Left ventricle myocardium inferior (tissue), 1 donor: ENCODE measurements at regions of chr14 and their contacts with region 1.

Region 1: DNA sequence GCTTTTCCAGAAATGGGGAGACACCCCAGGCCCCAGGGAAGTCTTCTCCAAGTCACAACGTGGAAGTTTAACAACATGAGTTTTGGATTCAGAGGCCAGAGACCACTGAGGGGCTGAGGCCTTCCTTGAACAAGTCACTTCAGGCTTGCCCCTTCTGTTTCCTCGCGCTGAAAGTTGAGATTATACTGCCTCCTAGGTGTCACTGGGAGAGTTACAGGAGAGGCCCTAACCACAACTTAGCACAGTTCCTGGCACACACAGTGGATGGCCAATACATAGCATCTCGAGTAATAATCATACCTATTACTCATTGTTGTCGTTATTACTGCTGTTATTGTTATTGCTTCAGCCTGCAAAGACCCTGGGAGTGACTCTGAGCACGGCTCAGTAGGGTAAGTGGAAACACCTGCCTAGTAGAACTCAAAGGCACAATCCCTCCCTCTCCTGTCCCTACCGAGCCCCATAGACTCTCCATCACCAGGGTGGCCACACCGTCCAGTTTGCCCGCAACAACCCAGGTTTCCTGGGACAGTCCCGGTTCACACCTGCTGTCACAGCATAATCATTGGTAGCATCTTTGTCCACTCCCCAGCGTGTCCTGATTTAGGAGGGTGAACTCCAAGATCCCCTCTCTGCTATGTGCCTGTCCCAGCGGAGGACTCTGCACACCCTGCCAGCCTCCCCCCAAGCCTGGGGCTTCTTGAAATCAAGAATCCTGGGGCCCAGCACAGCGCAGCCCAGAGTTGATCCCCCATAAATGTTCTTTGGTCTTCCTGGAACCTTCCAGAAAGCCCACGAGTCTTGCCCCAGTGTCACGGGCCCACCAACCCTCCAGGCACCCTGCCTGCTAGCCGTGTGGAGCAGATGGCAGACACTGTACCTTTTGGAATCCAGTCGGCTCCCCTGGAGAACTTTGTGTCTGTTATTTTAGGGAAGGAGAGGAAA is 85.0 kb downstream of the SYNE3 start:
- DNase-seq: no peak
- H3K4me3 ChIP-seq: no peak overlapping the region
- H3K27ac ChIP-seq: peak overlapping the region; percentile 43
- H3K4me1 ChIP-seq: peaks cover 14% of the 10 kb centered on the region
- H3K27me3 ChIP-seq: no peaks in the 10 kb centered on the region
- CTCF ChIP-seq: peak; percentile 62

Region 2: GRCh38 chr14:94691660-94692034 is 739.8 kb before region 1 on chr14:
- intact Hi-C with region 1: loop called (anchors 10 kb)
- DNase-seq: no peak
- H3K4me3 ChIP-seq: no peak overlapping the region
- H3K27ac ChIP-seq: no peak overlapping the region
- H3K4me1 ChIP-seq: peaks cover 3% of the 10 kb centered on the region
- H3K27me3 ChIP-seq: peaks cover 57% of the 10 kb centered on the region
- CTCF ChIP-seq: no peak

Region 3: GRCh38 chr14:95294834-95295599 is 136.5 kb before region 1 on chr14:
- intact Hi-C with region 1: no loop called
- DNase-seq: no peak
- H3K4me3 ChIP-seq: no peak overlapping the region
- H3K27ac ChIP-seq: peak overlapping the region; percentile 68
- H3K4me1 ChIP-seq: peaks cover 28% of the 10 kb centered on the region
- H3K27me3 ChIP-seq: no peaks in the 10 kb centered on the region
- CTCF ChIP-seq: no peak

Region 4: DNA sequence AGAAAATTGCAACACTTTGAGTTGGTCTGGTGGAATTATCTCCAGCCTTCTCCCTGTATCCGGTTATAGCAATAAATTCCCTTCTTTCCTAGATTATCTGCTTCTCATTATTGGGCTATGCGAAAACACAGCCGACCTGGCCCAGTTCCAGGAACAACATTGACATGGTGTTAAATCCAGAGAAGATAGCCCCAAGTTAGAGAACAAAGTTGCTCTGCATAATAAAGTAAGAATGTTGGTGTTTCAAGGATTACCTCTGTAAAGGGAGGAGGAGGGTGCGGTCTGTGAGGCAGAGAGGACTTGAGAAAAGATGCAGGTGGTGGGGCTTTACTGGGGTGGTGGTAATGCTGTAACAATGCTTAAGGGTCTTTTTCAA is 270.4 kb after region 1 on chr14:
- intact Hi-C with region 1: no loop called
- DNase-seq: no peak
- H3K4me3 ChIP-seq: no peak overlapping the region
- H3K27ac ChIP-seq: no peak overlapping the region
- H3K4me1 ChIP-seq: no peaks in the 10 kb centered on the region
- H3K27me3 ChIP-seq: peaks cover 92% of the 10 kb centered on the region
- CTCF ChIP-seq: no peak